CD8-positive, alpha-beta T cell (primary cell): ENCODE measurements at regions of chr21 and their contacts with region 1.

Region 1: DNA sequence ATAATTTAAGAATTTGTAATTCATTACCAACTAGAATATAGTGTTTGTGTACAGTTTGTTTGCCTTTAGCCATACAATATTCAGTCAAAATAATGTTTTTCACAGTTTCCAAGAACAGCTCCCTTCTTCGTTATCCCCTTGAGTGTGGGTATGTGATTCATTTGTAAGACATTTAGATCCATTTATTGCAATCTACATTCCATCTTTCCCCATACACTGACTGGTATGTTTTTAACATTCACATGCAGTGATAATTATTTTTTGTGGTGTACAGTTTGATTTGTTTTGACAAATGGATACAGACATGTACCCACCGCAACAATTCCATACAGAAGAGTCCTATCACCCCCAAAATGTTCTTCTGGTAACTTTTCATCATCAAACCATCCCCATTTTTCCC is 589.1 kb upstream of the ADAMTS5 start:
- DNase-seq: no peak
- ATAC-seq: no peak
- H3K4me3 ChIP-seq: no peak overlapping the region
- H3K4me3 Mint-ChIP-seq: no peak overlapping the region
- H3K27ac ChIP-seq: no peak overlapping the region
- H3K27ac Mint-ChIP-seq: no peak overlapping the region
- H3K4me1 ChIP-seq: no peaks in the 10 kb centered on the region
- H3K4me1 Mint-ChIP-seq: no peaks in the 10 kb centered on the region
- H3K27me3 ChIP-seq: no peaks in the 10 kb centered on the region
- H3K27me3 Mint-ChIP-seq: no peaks in the 10 kb centered on the region
- CTCF ChIP-seq: no peak

Region 2: GRCh38 chr21:28074676-28075075 is 518.7 kb after region 1 on chr21:
- CTCF ChIA-PET with region 1: no interaction called
- POLR2A ChIA-PET with region 1: no interaction called
- intact Hi-C with region 1: loop called in 1 of 2 experiments (anchors 5 kb)
- DNase-seq: no peak
- ATAC-seq: no peak
- H3K4me3 ChIP-seq: no peak overlapping the region
- H3K4me3 Mint-ChIP-seq: no peak overlapping the region
- H3K27ac ChIP-seq: no peak overlapping the region
- H3K27ac Mint-ChIP-seq: no peak overlapping the region
- H3K4me1 ChIP-seq: no peaks in the 10 kb centered on the region
- H3K4me1 Mint-ChIP-seq: no peaks in the 10 kb centered on the region
- H3K27me3 ChIP-seq: no peaks in the 10 kb centered on the region
- H3K27me3 Mint-ChIP-seq: no peaks in the 10 kb centered on the region
- CTCF ChIP-seq: no peak